ENCODE measurements at regions of chr7 and their contacts with region 1.

Region 1: GRCh38 chr7:114663502-114663901 is 248.9 kb downstream of the FOXP2 start:
- DNase-seq: no peak
- H3K4me3 ChIP-seq: no peak overlapping the region
- H3K27ac ChIP-seq: no peak overlapping the region
- H3K4me1 ChIP-seq: peaks cover 0 to 37% (median 29%) of the 10 kb centered on the region in 4 donors
- H3K27me3 ChIP-seq: no peaks in the 10 kb centered on the region
- CTCF ChIP-seq: peak in 1 of 4 experiments; percentile 25
- EP300 ChIP-seq: no peak
- POLR2A ChIP-seq: no peak

Region 2: GRCh38 chr7:114026486-114027089 is 636.9 kb before region 1 on chr7:
- intact Hi-C with region 1: loop called (anchors 10 kb)
- DNase-seq: no peak
- H3K4me3 ChIP-seq: no peak overlapping the region
- H3K27ac ChIP-seq: no peak overlapping the region
- H3K4me1 ChIP-seq: no peaks in the 10 kb centered on the region
- H3K27me3 ChIP-seq: no peaks in the 10 kb centered on the region
- CTCF ChIP-seq: peak; percentile 13 to 56 (median 41)
- EP300 ChIP-seq: no peak
- POLR2A ChIP-seq: no peak

Region 3: GRCh38 chr7:114414156-114415063 is 249.1 kb before region 1 on chr7 and contains the start of gene FOXP2:
- intact Hi-C with region 1: loop called (anchors 5 kb)
- DNase-seq: no peak
- H3K4me3 ChIP-seq: peak within 1 kb of the TSS; percentile 31 to 55 (median 50)
- H3K27ac ChIP-seq: peak within 1 kb of the TSS; percentile 79 to 91 (median 85)
- H3K4me1 ChIP-seq: peaks cover 0 to 29% (median 17%) of the 10 kb centered on the region in 4 donors
- H3K27me3 ChIP-seq: no peaks in the 10 kb centered on the region
- CTCF ChIP-seq: no peak
- EP300 ChIP-seq: peak in 1 of 4 donors; percentile 3
- POLR2A ChIP-seq: no peak
- total RNA-seq, gene FOXP2: 91.2 to 150 (median 102) TPM

Region 4: GRCh38 chr7:114426382-114427223 is 236.9 kb before region 1 on chr7:
- intact Hi-C with region 1: loop called (anchors 5 kb)
- DNase-seq: no peak
- H3K4me3 ChIP-seq: no peak overlapping the region
- H3K27ac ChIP-seq: no peak overlapping the region
- H3K4me1 ChIP-seq: peaks cover 0 to 98% (median 58%) of the 10 kb centered on the region in 4 donors
- H3K27me3 ChIP-seq: no peaks in the 10 kb centered on the region
- CTCF ChIP-seq: peak in 3 of 4 experiments; percentile 25 to 39 (median 36)
- EP300 ChIP-seq: no peak
- POLR2A ChIP-seq: no peak

Region 5: DNA sequence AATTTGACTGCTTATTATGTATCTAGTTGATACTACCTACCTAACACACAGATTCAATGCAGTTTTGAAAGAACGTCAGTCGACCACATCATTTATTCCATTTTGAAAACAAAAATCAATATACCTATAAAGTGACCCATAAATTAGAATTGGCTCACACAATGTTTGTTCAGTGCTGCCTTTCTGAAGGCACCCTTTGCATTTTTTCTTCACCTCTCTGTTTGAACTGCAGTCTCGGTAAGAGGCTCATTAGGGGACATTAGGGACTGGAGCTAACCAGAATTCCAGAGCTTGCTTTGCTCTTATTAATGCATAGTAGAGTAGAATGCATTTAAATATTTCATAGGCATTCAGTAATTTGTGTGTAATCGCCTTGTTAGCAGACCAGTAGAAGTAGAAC is 14.8 kb before region 1 on chr7:
- intact Hi-C with region 1: loop called (anchors 1 kb)
- DNase-seq: no peak
- H3K4me3 ChIP-seq: no peak overlapping the region
- H3K27ac ChIP-seq: no peak overlapping the region
- H3K4me1 ChIP-seq: peaks cover 0 to 20% (median 12%) of the 10 kb centered on the region in 4 donors
- H3K27me3 ChIP-seq: no peaks in the 10 kb centered on the region
- CTCF ChIP-seq: no peak
- EP300 ChIP-seq: no peak
- POLR2A ChIP-seq: no peak

Measured in sigmoid colon (tissue), 7 donors.